Endothelial cell of umbilical vein (primary cell): ENCODE measurements at regions of chr10 and their contacts with region 1.

Region 1: DNA sequence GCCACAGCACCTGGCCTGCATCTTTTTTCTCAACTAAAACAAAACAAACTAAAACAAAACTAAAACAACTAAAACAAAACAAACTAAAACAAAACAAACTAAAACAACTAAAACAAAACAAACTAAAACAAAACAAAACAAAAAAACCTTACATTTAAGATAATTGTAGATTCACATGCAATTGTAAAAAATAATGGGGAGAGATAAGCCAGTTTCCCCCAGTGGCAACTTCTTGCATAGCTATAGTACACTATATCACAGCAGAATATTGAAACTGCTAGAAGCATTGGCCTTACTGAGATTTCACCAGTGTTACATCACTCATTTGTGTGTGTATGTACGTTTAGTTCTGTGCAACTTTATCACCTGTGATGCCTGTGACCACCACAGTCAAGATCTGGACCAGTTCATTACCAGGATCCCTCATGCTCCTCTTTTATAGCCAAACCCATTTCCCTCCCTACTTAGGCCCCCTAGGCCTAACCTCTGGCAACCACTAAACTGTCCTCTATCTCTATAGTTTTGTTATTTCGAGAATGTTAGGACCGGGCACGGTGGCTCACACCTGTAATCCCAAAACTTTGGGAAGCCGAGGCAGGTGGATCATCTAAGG is 9.3 kb downstream of the FXYD4 start:
- DNase-seq: no peak
- H3K4me3 ChIP-seq: no peak overlapping the region
- H3K27ac ChIP-seq: no peak overlapping the region
- H3K4me1 ChIP-seq: no peaks in the 10 kb centered on the region
- H3K27me3 ChIP-seq: no peaks in the 10 kb centered on the region
- CTCF ChIP-seq: peak in 1 of 2 donors; percentile 7
- POLR2A ChIP-seq: no peak

Region 2: GRCh38 chr10:43304687-43305340 is 75.9 kb before region 1 on chr10:
- CTCF ChIA-PET with region 1: no interaction called
- POLR2A ChIA-PET with region 1: no interaction called
- dilution Hi-C with region 1: no loop called
- intact Hi-C with region 1: no loop called
- DNase-seq: peak; percentile 11
- H3K4me3 ChIP-seq: peak overlapping the region in 1 of 3 experiments; percentile 10
- H3K27ac ChIP-seq: no peak overlapping the region
- H3K4me1 ChIP-seq: no peaks in the 10 kb centered on the region
- H3K27me3 ChIP-seq: peaks cover 11 to 22% of the 10 kb centered on the region in 2 experiments
- CTCF ChIP-seq: no peak
- POLR2A ChIP-seq: no peak

Region 3: DNA sequence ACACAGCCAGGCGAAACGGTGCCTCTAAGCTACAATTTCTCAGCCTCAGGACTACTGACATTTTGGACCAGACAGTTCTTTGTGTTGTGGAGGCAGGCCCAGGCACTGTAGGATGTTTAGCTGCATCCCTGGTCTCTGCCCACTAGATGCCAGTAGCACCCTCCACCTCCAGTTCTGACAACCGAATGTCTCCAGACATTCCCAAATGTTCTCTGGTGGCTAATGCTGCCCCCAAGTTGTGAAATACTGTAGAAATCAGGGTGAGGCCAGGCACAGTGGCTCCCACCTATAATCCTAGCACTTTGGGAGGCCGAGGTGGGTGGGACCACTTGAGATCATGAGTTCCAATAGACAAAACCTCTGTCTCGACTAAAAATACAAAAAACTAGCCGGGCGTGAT is 10.0 kb after region 1 on chr10:
- CTCF ChIA-PET with region 1: interaction called, 13 read pairs
- POLR2A ChIA-PET with region 1: no interaction called
- dilution Hi-C with region 1: no loop called
- intact Hi-C with region 1: no loop called
- DNase-seq: peak; percentile 30
- H3K4me3 ChIP-seq: no peak overlapping the region
- H3K27ac ChIP-seq: no peak overlapping the region
- H3K4me1 ChIP-seq: peaks cover 15% of the 10 kb centered on the region
- H3K27me3 ChIP-seq: no peaks in the 10 kb centered on the region
- CTCF ChIP-seq: peak; percentile 51 to 67
- POLR2A ChIP-seq: no peak

Region 4: DNA sequence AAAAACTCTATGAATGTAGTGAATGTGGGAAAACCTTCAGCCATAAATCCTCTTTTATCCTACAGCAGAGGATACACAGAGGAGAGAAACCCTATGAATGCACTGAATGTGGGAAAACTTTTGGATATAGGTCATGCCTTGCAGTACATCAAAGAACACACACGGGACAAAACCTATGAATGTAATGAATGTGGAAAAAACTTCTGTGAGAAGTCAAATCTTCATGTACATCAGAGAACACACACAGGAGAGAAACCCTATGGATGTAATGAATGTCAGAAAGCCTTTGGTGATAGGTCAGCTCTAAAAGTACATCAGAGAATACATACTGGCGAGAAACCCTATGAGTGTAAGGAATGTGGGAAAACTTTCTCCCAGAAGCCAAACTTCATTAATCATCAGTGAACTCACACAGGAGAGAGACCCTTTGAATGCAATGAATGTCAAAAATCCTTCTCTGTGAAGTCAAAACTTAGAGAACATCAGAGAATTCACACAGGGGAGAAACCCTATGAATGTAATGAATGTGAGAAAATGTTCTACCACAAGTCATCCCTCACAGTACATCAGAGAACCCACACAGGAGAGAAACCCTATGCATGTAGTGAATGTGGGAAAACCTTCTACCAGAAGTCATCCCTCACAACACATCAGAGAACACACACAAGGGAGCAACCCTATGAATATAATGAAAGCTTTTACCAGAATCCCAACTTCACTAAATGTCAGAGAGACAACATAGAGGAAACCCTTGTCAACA is 101.8 kb after region 1 on chr10:
- CTCF ChIA-PET with region 1: no interaction called
- POLR2A ChIA-PET with region 1: no interaction called
- dilution Hi-C with region 1: no loop called
- intact Hi-C with region 1: no loop called
- DNase-seq: no peak
- H3K4me3 ChIP-seq: no peak overlapping the region
- H3K27ac ChIP-seq: no peak overlapping the region
- H3K4me1 ChIP-seq: no peaks in the 10 kb centered on the region
- H3K27me3 ChIP-seq: no peaks in the 10 kb centered on the region
- CTCF ChIP-seq: no peak
- POLR2A ChIP-seq: no peak